ENCODE measurements at regions of chr1 and their contacts with region 1.

Region 1: DNA sequence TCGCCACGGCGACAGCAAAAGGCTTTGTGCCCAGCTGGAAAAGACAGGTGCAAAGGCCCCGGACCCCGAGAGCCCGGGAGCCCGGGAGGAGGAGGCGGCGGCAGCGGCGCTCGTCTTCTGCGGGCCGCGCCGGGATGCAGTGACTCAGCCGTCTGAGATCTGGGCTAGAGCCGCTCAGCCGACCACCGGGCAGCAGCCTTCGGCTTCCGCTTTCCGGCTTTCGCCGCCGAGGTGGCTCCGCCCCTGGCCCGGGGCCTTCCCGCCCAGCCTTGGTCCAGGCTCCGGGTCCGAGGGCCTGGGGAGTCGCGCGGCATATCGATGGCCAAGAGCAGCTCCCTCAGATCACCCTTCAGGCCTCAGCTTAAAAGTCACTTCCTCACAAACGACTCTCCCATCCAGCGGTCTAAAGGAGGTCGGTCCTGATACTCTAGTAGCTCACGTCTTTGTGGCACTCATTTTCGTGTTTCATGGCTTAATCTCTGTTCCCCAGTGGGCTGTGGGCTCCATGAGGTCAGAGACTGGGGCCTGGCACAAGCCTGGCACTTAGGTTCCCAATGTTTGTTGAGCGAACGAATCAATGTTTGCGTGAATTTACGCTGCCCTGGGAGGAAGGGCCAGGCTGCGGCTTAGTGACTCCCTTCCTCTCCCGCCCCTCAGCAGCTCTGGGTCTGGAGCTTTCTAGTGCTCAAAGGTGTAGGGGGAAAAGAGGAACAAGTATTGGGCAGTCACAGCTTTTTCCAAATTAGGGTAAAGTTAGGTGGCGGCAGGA is at the start of gene PHTF1:
- DNase-seq: peak; percentile 75
- H3K4me3 ChIP-seq: peak within 1 kb of the TSS; percentile 86
- H3K27ac ChIP-seq: peak within 1 kb of the TSS; percentile 58
- H3K4me1 ChIP-seq: peaks cover 20% of the 10 kb centered on the region
- CTCF ChIP-seq: no peak
- total RNA-seq, gene PHTF1: 7.1 and 11.8 TPM in 2 replicates

Region 2: DNA sequence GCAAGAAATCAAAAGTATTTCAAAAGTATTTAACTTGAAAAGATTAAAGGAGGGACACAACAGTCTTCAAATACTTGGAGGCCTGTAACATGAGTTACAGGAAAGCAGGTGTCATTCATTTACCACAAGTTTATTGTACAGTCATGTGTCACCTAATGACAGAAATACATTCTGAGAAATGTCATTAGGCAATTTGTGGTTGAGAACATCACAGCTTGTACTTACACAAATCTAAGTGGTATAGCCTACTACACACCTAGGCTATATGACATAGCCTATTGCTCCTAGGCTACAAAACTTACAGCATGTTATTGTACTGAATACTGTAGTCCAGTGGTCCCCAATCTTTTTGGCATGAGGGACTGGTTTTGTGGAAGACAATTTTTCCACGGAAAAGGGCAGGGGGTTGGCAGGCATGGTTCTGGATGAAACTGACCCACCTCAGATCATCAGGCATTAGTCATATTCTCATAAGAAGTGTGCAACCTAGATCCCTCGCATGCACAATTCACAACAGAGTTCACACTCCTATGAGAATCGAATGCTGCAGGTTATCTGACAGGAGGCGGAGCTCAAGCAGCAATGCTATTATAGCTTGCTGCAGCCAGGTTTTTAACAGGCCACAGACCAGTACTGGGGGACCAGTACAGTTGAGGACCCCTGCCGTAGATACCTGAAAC is 24.7 kb after region 1 on chr1:
- CTCF ChIA-PET with region 1: interaction called, 5 read pairs
- POLR2A ChIA-PET with region 1: interaction called, 11 read pairs
- intact Hi-C with region 1: no loop called
- DNase-seq: no peak
- H3K4me3 ChIP-seq: no peak overlapping the region
- H3K27ac ChIP-seq: peak overlapping the region; percentile 32
- H3K4me1 ChIP-seq: peaks cover 33% of the 10 kb centered on the region
- CTCF ChIP-seq: no peak

Region 3: DNA sequence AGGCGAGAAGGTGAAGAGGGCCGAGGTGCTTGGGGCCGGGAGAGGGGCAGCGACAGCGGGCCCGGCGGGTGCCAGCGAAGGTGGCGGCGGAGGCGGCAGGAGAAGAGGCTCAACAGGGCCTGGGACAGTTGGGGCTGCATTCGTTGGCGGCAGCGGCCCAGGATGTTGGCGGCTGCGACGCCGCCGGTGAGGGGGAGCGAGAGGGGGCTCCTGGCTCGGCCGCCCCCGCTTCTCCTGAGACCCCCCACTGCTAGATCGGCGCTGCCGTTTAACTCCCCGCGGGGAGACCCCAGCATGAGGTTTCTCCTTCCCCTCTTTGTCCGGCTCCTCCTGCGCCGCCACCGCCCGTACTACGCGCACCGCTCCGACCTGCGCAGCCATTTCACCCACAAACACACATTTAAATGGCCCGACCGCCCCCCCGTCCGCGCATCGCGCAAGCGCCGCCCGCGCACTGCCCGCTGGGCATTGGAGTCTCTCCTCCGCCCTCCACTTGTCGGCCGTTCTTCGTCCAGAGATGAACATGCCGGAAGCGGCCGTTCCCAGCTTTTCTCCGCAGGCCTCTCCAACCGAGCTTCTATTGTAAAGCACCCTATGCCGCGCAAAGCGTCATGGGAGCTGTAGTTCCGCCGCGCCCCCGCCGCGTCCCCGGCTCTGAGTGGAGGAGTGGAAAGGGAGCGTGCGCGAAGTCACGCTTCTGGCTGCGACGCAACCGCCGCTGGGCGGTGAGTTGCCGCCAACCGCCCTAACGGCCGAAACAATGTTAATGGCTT is 52.6 kb after region 1 on chr1 and contains the start of gene RSBN1:
- CTCF ChIA-PET with region 1: no interaction called
- POLR2A ChIA-PET with region 1: interaction called, 3 read pairs
- intact Hi-C with region 1: loop called (anchors 1 kb)
- DNase-seq: peak; percentile 99
- H3K4me3 ChIP-seq: peak within 1 kb of the TSS; percentile 84
- H3K27ac ChIP-seq: peak within 1 kb of the TSS; percentile 93
- H3K4me1 ChIP-seq: peaks cover 30% of the 10 kb centered on the region
- CTCF ChIP-seq: no peak
- total RNA-seq, gene RSBN1: 10.8 and 12.5 TPM in 2 replicates

Region 4: GRCh38 chr1:115193046-115193936 is 1433.8 kb after region 1 on chr1:
- CTCF ChIA-PET with region 1: no interaction called
- POLR2A ChIA-PET with region 1: interaction called, 11 read pairs
- intact Hi-C with region 1: no loop called
- DNase-seq: no peak
- H3K4me3 ChIP-seq: no peak overlapping the region
- H3K27ac ChIP-seq: no peak overlapping the region
- H3K4me1 ChIP-seq: no peaks in the 10 kb centered on the region
- CTCF ChIP-seq: no peak